Caco-2 (cell line): ENCODE measurements at regions of chr9 and their contacts with region 1.

Region 1: GRCh38 chr9:128688512-128689292 is at the start of gene SET:
- DNase-seq: peak; percentile 94 to 98
- H3K4me3 ChIP-seq: peak within 1 kb of the TSS; percentile 68
- H3K4me3 Mint-ChIP-seq: peak within 1 kb of the TSS; percentile 96
- H3K27ac Mint-ChIP-seq: peak within 1 kb of the TSS; percentile 93
- H3K4me1 ChIP-seq: peaks cover 29% of the 10 kb centered on the region
- H3K4me1 Mint-ChIP-seq: peaks cover 32% of the 10 kb centered on the region
- H3K27me3 ChIP-seq: no peaks in the 10 kb centered on the region
- H3K27me3 Mint-ChIP-seq: no peaks in the 10 kb centered on the region
- CTCF ChIP-seq: no peak
- total RNA-seq, gene SET: 710 and 745 TPM in 2 replicates

Region 2: DNA sequence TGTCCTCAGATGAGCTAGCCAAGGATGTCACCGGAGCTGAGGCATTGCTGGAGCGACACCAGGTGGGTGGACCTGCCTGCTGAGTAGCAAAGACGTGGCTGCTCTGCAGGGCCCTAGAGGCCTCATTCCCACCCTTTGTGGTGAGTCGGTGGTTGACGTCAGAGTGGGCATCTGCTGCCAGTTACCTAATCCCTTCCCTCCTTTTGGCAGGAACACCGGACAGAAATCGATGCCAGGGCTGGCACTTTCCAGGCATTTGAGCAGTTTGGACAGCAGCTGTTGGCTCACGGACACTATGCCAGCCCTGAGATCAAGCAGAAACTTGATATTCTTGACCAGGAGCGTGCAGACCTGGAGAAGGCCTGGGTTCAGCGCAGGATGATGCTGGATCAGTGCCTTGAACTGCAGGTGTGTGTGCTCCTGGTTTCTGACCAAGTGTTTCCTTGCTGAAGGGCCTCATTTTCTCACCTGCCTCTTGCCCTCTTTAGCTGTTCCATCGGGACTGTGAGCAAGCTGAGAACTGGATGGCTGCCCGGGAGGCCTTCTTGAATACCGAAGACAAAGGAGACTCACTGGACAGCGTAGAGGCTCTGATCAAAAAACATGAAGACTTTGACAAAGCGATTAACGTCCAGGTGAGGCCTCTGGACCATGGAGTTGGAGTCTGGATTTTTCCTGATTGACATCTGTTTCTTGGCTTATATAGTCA is 80.9 kb before region 1 on chr9:
- CTCF ChIA-PET with region 1: no interaction called
- POLR2A ChIA-PET with region 1: no interaction called
- intact Hi-C with region 1: no loop called
- DNase-seq: no peak
- H3K4me3 ChIP-seq: no peak overlapping the region
- H3K4me3 Mint-ChIP-seq: no peak overlapping the region
- H3K27ac Mint-ChIP-seq: no peak overlapping the region
- H3K4me1 ChIP-seq: no peaks in the 10 kb centered on the region
- H3K4me1 Mint-ChIP-seq: no peaks in the 10 kb centered on the region
- H3K27me3 ChIP-seq: no peaks in the 10 kb centered on the region
- H3K27me3 Mint-ChIP-seq: no peaks in the 10 kb centered on the region
- CTCF ChIP-seq: no peak

Region 3: DNA sequence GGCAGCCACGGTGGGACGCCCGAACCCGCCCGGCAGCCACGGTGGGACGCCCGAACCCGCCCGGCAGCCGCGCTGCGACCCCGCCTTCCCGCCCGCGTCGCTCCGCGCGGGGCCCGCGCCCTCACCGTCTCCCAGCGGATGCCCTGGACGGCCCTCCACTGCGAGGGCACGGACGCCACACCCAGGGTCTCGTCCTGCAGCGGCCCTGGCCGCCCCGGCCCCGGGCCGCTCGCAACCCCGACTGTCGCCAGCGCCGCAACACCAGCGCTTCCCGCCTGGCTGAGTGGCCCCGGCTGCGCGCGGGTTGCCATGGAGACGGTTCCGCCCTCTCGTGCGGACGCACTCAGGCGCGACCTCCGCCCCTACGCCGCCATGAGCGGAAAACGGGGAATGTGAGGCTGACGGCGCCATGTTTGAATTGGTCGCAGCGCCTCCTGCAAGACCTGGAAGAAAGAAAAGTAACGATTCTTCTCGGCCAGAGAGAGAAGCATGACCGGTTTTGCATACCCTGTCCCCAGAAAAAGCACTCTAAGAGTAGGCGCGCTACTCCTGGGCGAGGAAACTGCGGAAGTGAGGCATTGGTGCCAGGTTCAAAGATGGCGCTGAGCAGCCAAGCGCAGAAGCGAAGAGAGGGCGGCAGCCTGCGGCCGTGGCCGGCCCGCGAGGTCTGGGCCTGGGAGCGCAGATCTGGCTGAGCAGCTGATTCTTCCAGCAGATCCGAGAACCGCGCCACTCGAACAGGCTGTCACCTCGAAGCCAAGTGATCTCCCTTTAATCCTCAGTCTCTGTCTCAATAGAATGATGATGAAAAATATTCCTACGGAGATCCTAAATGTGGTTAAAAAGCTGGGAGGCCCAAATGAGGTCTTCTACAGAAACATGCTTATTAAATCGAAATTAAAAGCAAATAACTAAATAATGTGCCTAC is 32.0 kb before region 1 on chr9 and contains the start of gene DYNC2I2:
- CTCF ChIA-PET with region 1: no interaction called
- POLR2A ChIA-PET with region 1: interaction called, 4 read pairs
- intact Hi-C with region 1: loop called (anchors 1 kb)
- DNase-seq: peak; percentile 96 to 97
- H3K4me3 ChIP-seq: peak within 1 kb of the TSS; percentile 52
- H3K4me3 Mint-ChIP-seq: peak within 1 kb of the TSS; percentile 78
- H3K27ac Mint-ChIP-seq: peak within 1 kb of the TSS; percentile 100
- H3K4me1 ChIP-seq: no peaks in the 10 kb centered on the region
- H3K4me1 Mint-ChIP-seq: no peaks in the 10 kb centered on the region
- H3K27me3 ChIP-seq: no peaks in the 10 kb centered on the region
- H3K27me3 Mint-ChIP-seq: no peaks in the 10 kb centered on the region
- CTCF ChIP-seq: no peak
- total RNA-seq, gene DYNC2I2: 80.2 and 80.8 TPM in 2 replicates

Region 4: GRCh38 chr9:128723866-128724743 is 35.4 kb after region 1 on chr9 and contains the start of gene ZDHHC12:
- CTCF ChIA-PET with region 1: no interaction called
- POLR2A ChIA-PET with region 1: interaction called, 5 read pairs
- intact Hi-C with region 1: loop called (anchors 2 kb)
- DNase-seq: peak; percentile 99 to 100
- H3K4me3 ChIP-seq: peak within 1 kb of the TSS; percentile 81
- H3K4me3 Mint-ChIP-seq: peak within 1 kb of the TSS; percentile 95
- H3K27ac Mint-ChIP-seq: peak within 1 kb of the TSS; percentile 75
- H3K4me1 ChIP-seq: no peaks in the 10 kb centered on the region
- H3K4me1 Mint-ChIP-seq: peaks cover 15% of the 10 kb centered on the region
- H3K27me3 ChIP-seq: no peaks in the 10 kb centered on the region
- H3K27me3 Mint-ChIP-seq: no peaks in the 10 kb centered on the region
- CTCF ChIP-seq: no peak
- total RNA-seq, gene ZDHHC12: 71.0 and 73.7 TPM in 2 replicates

Region 5: GRCh38 chr9:128818099-128818838 is 129.6 kb after region 1 on chr9 and contains the start of gene ENDOG:
- CTCF ChIA-PET with region 1: no interaction called
- POLR2A ChIA-PET with region 1: no interaction called
- intact Hi-C with region 1: no loop called
- DNase-seq: peak; percentile 97 to 99
- H3K4me3 ChIP-seq: peak within 1 kb of the TSS; percentile 95
- H3K4me3 Mint-ChIP-seq: peak within 1 kb of the TSS; percentile 77
- H3K27ac Mint-ChIP-seq: peak within 1 kb of the TSS; percentile 29
- H3K4me1 ChIP-seq: no peaks in the 10 kb centered on the region; the same call in none of the 2 replicates
- H3K4me1 Mint-ChIP-seq: peaks cover 15% of the 10 kb centered on the region
- H3K27me3 ChIP-seq: no peaks in the 10 kb centered on the region
- H3K27me3 Mint-ChIP-seq: no peaks in the 10 kb centered on the region
- CTCF ChIP-seq: peak; percentile 94 to 95
- total RNA-seq, gene ENDOG: 25.9 and 30.0 TPM in 2 replicates